ENCODE measurements at regions of chr6 and their contacts with region 1.

Region 1: GRCh38 chr6:149182262-149182661 is 135.2 kb upstream of the TAB2 start:
- DNase-seq: no peak
- CTCF ChIP-seq: no peak

Region 2: GRCh38 chr6:149012040-149012545 is 170.2 kb before region 1 on chr6:
- in situ Hi-C with region 1: no loop called
- DNase-seq: no peak
- CTCF ChIP-seq: no peak

Region 3: DNA sequence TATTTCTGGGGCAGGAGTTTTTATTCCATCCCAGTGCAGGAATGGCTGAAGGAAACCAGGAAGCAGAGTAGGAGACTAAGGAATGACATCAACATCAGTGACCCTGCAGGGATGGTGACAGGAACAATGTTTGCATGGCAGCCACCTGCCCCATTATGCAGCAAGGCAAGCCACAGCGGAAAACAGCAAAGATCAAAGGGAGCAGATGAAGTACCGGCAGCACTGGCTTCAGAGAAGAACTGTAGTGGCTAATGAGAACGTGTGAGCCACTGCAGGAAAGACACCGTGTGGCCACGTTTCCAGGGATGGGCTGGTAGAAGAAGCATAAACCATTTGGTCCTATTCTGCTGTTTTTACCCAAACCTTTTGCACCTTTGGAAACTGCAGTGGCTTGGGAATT is 82.4 kb after region 1 on chr6:
- in situ Hi-C with region 1: no loop called
- DNase-seq: no peak
- CTCF ChIP-seq: no peak

Region 4: DNA sequence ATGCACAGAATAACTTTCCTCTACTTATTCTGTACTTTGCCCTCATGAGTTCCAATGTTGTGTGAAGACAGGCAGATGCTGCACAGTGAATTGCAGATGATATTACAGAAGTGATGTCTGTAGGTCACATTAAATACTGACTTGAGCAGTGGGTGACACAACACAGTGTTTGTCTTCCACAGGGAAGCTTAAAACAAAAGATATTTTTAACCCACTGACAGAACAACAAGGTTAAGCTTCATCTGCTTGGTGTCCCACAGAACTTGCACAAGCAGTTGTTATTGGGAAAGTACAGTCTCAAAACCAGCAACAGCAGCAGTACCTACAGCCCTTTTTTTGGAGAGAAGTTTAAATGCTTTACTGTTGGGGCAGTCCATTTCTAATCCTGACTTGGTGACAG is 228.3 kb after region 1 on chr6:
- in situ Hi-C with region 1: loop called (anchors 10 kb)
- DNase-seq: no peak
- CTCF ChIP-seq: no peak

Measured in GM13977 (cell line).